ENCODE measurements at regions of chr6 and their contacts with region 1.

Region 1: DNA sequence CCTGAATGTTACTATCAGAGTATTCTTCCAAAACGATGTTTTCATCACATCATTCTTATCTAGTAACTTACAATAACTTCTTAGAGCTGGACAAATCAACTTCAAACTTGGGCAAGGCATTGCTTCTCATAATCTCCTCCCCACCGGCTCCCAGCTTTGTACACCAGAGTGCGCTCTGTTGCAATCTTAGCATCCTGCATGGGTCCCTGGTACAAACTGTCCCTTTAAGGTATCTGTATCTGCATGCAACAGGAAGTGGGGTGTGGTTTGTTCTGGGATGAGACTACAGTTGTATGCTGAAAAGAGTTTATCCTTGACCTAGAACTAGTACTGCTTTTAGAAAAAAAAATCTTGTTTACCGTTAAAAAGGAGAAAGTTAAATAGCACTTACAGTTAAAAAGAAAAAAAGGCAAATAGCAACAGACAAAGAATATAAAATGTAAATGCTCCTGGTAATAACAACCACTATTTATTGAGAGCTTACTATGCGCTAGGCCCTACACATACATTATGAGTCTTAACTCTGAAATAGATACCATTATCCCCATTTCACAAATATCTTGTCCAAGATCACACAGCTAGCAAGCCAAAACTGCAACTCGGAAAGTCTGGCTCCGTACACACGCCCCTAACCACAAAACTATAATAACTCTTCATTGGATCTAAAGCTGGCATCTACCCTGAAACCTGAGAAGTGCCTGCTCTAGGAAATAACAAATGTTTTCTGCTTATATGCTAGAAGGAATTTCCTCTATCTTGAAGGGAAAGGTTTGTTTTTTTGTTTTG is 9.8 kb upstream of the HECA start:
- DNase-seq: peak; percentile 76
- H3K4me3 Mint-ChIP-seq: peak overlapping the region; percentile 43
- H3K27ac Mint-ChIP-seq: peak overlapping the region; percentile 95
- H3K4me1 Mint-ChIP-seq: peaks cover 38% of the 10 kb centered on the region
- H3K27me3 Mint-ChIP-seq: no peaks in the 10 kb centered on the region

Region 2: DNA sequence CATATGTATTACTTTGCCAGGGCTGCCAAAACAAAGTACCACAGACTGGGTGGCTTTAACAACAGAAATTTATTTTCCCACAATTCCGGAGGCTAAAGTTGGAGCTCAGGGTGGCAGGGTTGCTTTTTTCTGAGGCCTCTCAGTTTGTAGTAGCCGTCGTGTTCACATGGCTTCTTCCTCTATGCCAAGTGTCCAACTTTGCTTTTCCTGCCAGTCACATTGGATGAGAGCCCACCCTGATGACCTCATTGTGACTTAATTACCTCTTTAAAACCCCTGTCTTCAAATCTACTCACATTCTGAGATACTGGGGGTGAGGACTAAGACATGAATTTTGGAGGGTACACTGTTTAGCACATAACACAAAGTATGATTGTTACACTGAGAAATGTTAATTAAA is 339.1 kb before region 1 on chr6:
- intact Hi-C with region 1: no loop called
- DNase-seq: no peak
- H3K4me3 Mint-ChIP-seq: no peak overlapping the region
- H3K27ac Mint-ChIP-seq: no peak overlapping the region
- H3K4me1 Mint-ChIP-seq: peaks cover 4% of the 10 kb centered on the region
- H3K27me3 Mint-ChIP-seq: no peaks in the 10 kb centered on the region

Region 3: GRCh38 chr6:139028658-139029469 is 96.2 kb before region 1 on chr6 and contains the start of gene ABRACL:
- intact Hi-C with region 1: no loop called
- DNase-seq: peak; percentile 77
- H3K4me3 Mint-ChIP-seq: peak within 1 kb of the TSS; percentile 93
- H3K27ac Mint-ChIP-seq: peak within 1 kb of the TSS; percentile 89
- H3K4me1 Mint-ChIP-seq: peaks cover 17% of the 10 kb centered on the region
- H3K27me3 Mint-ChIP-seq: no peaks in the 10 kb centered on the region
- total RNA-seq, gene ABRACL: 151 and 161 TPM in 2 replicates

Region 4: GRCh38 chr6:139109558-139109957 is 15.5 kb before region 1 on chr6:
- intact Hi-C with region 1: loop called (anchors 1 kb)
- DNase-seq: no peak
- H3K4me3 Mint-ChIP-seq: no peak overlapping the region
- H3K27ac Mint-ChIP-seq: no peak overlapping the region
- H3K4me1 Mint-ChIP-seq: peaks cover 28% of the 10 kb centered on the region
- H3K27me3 Mint-ChIP-seq: no peaks in the 10 kb centered on the region

Region 5: GRCh38 chr6:139153855-139154254 is 28.8 kb after region 1 on chr6:
- intact Hi-C with region 1: loop called (anchors 1 kb)
- DNase-seq: no peak
- H3K4me3 Mint-ChIP-seq: peak overlapping the region; percentile 15
- H3K27ac Mint-ChIP-seq: peak overlapping the region; percentile 73
- H3K4me1 Mint-ChIP-seq: peaks cover 69% of the 10 kb centered on the region
- H3K27me3 Mint-ChIP-seq: no peaks in the 10 kb centered on the region

Region 6: GRCh38 chr6:139173172-139173571 is 48.1 kb after region 1 on chr6:
- intact Hi-C with region 1: loop called (anchors 2 kb)
- DNase-seq: no peak
- H3K4me3 Mint-ChIP-seq: no peak overlapping the region
- H3K27ac Mint-ChIP-seq: peak overlapping the region; percentile 70
- H3K4me1 Mint-ChIP-seq: peaks cover 73% of the 10 kb centered on the region
- H3K27me3 Mint-ChIP-seq: no peaks in the 10 kb centered on the region

Region 7: GRCh38 chr6:139250296-139251044 is 125.4 kb after region 1 on chr6:
- intact Hi-C with region 1: loop called (anchors 1 kb)
- DNase-seq: peak; percentile 56
- H3K4me3 Mint-ChIP-seq: peak overlapping the region; percentile 48
- H3K27ac Mint-ChIP-seq: peak overlapping the region; percentile 70
- H3K4me1 Mint-ChIP-seq: peaks cover 37% of the 10 kb centered on the region
- H3K27me3 Mint-ChIP-seq: no peaks in the 10 kb centered on the region

Region 8: GRCh38 chr6:139364302-139364981 is 239.4 kb after region 1 on chr6:
- intact Hi-C with region 1: loop called (anchors 1 kb)
- DNase-seq: no peak
- H3K4me3 Mint-ChIP-seq: no peak overlapping the region
- H3K27ac Mint-ChIP-seq: no peak overlapping the region
- H3K4me1 Mint-ChIP-seq: peaks cover 24% of the 10 kb centered on the region
- H3K27me3 Mint-ChIP-seq: peaks cover 1% of the 10 kb centered on the region

Region 9: GRCh38 chr6:139597771-139598755 is 473.0 kb after region 1 on chr6:
- intact Hi-C with region 1: no loop called
- DNase-seq: no peak
- H3K4me3 Mint-ChIP-seq: no peak overlapping the region
- H3K27ac Mint-ChIP-seq: no peak overlapping the region
- H3K4me1 Mint-ChIP-seq: peaks cover 5% of the 10 kb centered on the region
- H3K27me3 Mint-ChIP-seq: peaks cover 1% of the 10 kb centered on the region